Body of pancreas (tissue), 4 donors: ENCODE measurements at regions of chr13 and their contacts with region 1.

Region 1: GRCh38 chr13:27980280-27980998 is 8.1 kb downstream of the URAD start:
- DNase-seq: peak in 1 of 4 donors; percentile 43
- ATAC-seq: no peak
- H3K4me3 ChIP-seq: no peak overlapping the region
- H3K27ac ChIP-seq: no peak overlapping the region
- H3K4me1 ChIP-seq: peaks cover 38% of the 10 kb centered on the region
- H3K27me3 ChIP-seq: peaks cover 7 to 30% of the 10 kb centered on the region in 2 donors
- CTCF ChIP-seq: no peak
- POLR2A ChIP-seq: no peak

Region 2: GRCh38 chr13:26985285-26985878 is 995.1 kb before region 1 on chr13:
- intact Hi-C with region 1: loop called (anchors 10 kb)
- DNase-seq: peak; percentile 83 to 89 (median 84)
- ATAC-seq: peak; percentile 57
- H3K4me3 ChIP-seq: no peak overlapping the region
- H3K27ac ChIP-seq: no peak overlapping the region
- H3K4me1 ChIP-seq: peaks cover 26% of the 10 kb centered on the region
- H3K27me3 ChIP-seq: no peaks in the 10 kb centered on the region
- CTCF ChIP-seq: peak; percentile 56 to 92 (median 89)
- POLR2A ChIP-seq: no peak

Region 3: DNA sequence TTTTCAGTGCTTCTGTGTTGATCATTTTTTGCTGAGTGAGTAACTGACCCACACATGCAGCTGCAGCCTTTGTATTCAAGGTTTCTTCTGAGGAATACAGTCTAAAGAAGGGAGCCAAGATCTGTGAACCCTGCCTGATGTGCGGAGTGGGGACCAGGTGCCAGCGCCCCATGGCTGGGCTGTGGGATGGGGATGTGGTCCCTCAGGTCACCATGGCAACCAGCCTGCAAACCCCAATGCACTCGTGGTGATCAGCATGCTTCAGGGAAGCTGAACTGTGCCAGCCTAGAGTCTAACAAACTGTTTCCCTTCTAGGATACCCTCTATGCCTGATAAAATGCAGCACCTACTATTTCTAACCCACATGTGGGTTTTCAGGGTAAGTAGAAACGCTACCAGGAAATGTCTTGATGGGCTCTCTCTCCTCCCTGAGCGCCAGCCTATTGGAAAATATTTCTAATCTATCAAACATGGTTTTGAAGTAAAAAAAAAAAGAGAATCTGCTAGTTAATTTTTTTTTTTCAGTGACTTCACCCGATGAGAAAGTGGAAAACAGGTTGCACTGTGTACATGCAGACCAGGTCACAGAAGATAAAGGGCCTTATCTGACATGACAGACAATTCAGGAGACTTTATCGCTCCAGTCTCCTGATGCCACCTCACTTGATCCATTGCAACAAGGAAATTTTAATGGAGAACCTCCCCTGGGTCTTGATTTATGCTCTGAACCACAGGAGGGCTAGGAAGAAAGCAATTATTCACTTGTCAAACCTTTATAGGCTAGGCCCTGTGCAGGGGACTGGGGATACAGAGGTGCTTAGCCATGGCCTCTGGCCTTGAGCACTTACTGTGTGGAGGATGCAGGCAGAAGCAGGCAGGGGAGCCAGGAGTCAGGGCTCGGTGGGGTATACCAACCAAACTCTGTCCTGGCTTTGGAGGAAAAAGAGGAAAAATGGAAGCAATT is 658.7 kb before region 1 on chr13:
- intact Hi-C with region 1: no loop called
- DNase-seq: no peak
- ATAC-seq: no peak
- H3K4me3 ChIP-seq: no peak overlapping the region
- H3K27ac ChIP-seq: no peak overlapping the region
- H3K4me1 ChIP-seq: no peaks in the 10 kb centered on the region
- H3K27me3 ChIP-seq: no peaks in the 10 kb centered on the region
- CTCF ChIP-seq: no peak
- POLR2A ChIP-seq: no peak

Region 4: GRCh38 chr13:27362064-27362883 is 618.2 kb before region 1 on chr13:
- intact Hi-C with region 1: loop called (anchors 5 kb)
- DNase-seq: peak; percentile 91 to 94 (median 92)
- ATAC-seq: peak; percentile 96
- H3K4me3 ChIP-seq: peak overlapping the region; percentile 4 to 7
- H3K27ac ChIP-seq: peak overlapping the region; percentile 43 to 64 (median 54)
- H3K4me1 ChIP-seq: peaks cover 15% of the 10 kb centered on the region
- H3K27me3 ChIP-seq: no peaks in the 10 kb centered on the region
- CTCF ChIP-seq: peak; percentile 79 to 98 (median 96)
- POLR2A ChIP-seq: peak in 2 of 3 donors; percentile 54 to 62

Region 5: GRCh38 chr13:27533155-27533643 is 447.2 kb before region 1 on chr13:
- intact Hi-C with region 1: loop called (anchors 10 kb)
- DNase-seq: peak; percentile 90 to 94 (median 92)
- ATAC-seq: peak; percentile 98
- H3K4me3 ChIP-seq: no peak overlapping the region
- H3K27ac ChIP-seq: peak overlapping the region in 2 of 4 donors; percentile 49 to 57
- H3K4me1 ChIP-seq: peaks cover 7% of the 10 kb centered on the region
- H3K27me3 ChIP-seq: no peaks in the 10 kb centered on the region
- CTCF ChIP-seq: peak; percentile 92 to 99 (median 98)
- POLR2A ChIP-seq: no peak

Region 6: DNA sequence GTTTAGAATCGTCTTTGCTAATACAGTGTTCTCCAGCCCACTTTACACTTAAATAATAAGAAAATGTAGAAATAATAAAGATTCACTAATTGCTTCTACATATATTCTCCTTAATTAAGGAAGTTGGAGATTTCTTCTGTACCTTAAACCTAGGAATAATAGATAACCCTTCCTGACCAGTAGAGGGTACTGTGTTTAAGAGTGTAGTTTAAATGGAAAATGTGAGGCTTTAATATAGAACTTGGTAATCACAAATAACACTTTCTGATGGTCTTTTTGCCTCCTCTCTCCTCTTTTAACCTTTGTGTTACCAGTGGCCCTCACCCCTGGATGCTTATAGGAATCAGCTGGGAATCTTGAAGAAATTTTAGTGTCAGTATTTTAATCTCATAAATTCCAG is 699.2 kb after region 1 on chr13:
- intact Hi-C with region 1: no loop called
- DNase-seq: no peak
- ATAC-seq: no peak
- H3K4me3 ChIP-seq: no peak overlapping the region
- H3K27ac ChIP-seq: no peak overlapping the region
- H3K4me1 ChIP-seq: no peaks in the 10 kb centered on the region
- H3K27me3 ChIP-seq: no peaks in the 10 kb centered on the region
- CTCF ChIP-seq: peak in 5 of 7 experiments; percentile 17 to 34 (median 27)
- POLR2A ChIP-seq: no peak